GM10248 (cell line): ENCODE measurements at regions of chr10 and their contacts with region 1.

Region 1: GRCh38 chr10:11197266-11197712 is 179.6 kb downstream of the CELF2 start:
- DNase-seq: peak; percentile 47
- CTCF ChIP-seq: no peak

Region 2: GRCh38 chr10:11178606-11179515 is 18.4 kb before region 1 on chr10:
- CTCF ChIA-PET with region 1: interaction called, 13 read pairs
- POLR2A ChIA-PET with region 1: no interaction called
- DNase-seq: peak; percentile 79
- CTCF ChIP-seq: no peak